Prostate gland (tissue), 2 donors: ENCODE measurements at regions of chr6 and their contacts with region 1.

Region 1: DNA sequence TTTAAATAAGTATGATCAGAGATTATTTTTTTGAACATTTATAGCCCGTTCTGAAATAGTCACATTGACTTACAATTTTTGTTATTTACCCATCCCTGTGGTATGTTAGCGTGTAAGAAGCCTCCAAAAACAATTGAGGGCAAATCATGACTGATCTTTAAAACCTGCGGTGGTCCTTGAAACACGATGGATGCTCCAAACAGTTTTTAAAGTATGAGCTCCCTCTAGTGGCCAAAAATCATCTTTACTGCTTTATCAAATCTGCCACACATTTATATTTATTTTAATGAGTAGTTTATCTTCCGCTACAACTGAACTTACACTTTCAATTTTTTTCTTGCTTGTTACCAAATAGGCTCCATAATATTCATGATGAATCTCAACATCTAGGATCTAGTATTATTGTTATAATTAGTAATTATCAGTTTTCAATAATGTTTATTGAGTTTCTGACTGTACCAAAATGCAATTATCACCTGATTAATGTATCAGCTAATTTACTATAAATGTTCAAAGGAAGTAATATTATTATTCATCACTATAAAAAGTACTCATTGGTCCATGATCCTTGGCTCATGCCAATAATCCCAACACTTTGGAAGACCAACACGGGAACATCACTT is 52.2 kb downstream of the MARCKS start:
- DNase-seq: peak; percentile 29
- H3K4me3 ChIP-seq: no peak overlapping the region
- H3K27ac ChIP-seq: no peak overlapping the region
- H3K4me1 ChIP-seq: no peaks in the 10 kb centered on the region
- H3K27me3 ChIP-seq: no peaks in the 10 kb centered on the region
- CTCF ChIP-seq: peak; percentile 50 to 91 (median 66)
- POLR2A ChIP-seq: no peak

Region 2: GRCh38 chr6:112780498-112781096 is 1128.7 kb before region 1 on chr6:
- intact Hi-C with region 1: loop called (anchors 10 kb)
- DNase-seq: peak; percentile 68
- H3K4me3 ChIP-seq: no peak overlapping the region
- H3K27ac ChIP-seq: no peak overlapping the region
- H3K4me1 ChIP-seq: no peaks in the 10 kb centered on the region
- H3K27me3 ChIP-seq: no peaks in the 10 kb centered on the region
- CTCF ChIP-seq: peak; percentile 63 to 88 (median 84)
- POLR2A ChIP-seq: no peak

Region 3: DNA sequence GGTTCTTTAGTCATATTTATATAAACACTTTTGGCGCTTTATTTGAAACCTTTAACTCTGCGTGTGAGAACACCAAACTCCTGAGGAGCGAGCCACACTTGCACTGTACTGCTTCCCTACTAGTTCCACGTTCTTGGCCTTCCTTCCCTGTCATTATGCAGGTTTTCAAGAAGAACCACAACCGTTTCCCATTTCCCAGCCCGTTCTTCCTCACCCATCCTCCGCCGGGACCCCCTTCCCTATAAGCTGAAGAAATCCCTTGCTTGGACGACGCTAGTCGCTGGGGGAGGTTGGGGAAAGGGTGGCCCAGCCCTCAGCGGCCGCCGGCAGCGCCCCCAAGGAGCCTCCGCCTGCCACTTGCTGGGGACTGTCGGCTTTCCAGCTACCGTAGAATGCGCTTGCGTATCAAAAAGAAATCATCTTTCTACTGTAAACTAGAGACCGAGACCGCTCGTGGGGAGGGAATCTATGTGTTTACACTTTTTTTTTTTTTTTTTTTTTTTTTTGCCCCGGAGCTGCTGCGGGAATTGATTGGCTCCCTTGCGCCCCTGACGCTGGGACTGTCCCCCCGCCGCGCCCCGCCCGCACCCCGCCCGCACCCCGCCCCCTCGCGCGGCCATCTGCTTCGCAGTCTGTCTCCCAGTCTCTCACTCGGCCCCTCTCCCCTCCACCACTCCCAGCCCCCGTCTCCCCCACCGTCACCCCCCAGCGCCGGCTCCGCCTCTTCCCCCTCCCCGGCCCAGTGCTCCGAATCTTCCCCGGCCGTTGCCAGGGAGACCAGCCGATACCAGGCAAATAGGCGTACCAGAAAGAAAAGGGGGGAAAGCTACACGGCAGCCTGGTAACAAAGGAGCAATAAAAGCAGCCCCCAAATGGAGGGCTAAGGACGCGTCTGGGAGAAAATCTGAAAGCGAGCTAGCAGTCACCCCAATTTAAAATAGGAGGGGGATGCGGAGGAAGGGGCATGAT is 54.5 kb before region 1 on chr6:
- intact Hi-C with region 1: no loop called
- DNase-seq: peak; percentile 71
- H3K4me3 ChIP-seq: peak overlapping the region; percentile 68 to 72
- H3K27ac ChIP-seq: peak overlapping the region; percentile 90 to 94
- H3K4me1 ChIP-seq: no peaks in the 10 kb centered on the region
- H3K27me3 ChIP-seq: no peaks in the 10 kb centered on the region
- CTCF ChIP-seq: peak in 1 of 4 experiments; percentile 19
- POLR2A ChIP-seq: no peak